ENCODE measurements at regions of chr3 and their contacts with region 1.

Region 1: GRCh38 chr3:43998836-43999727 is 242.6 kb upstream of the TOPAZ1 start:
- DNase-seq: no peak
- H3K4me3 ChIP-seq: peak overlapping the region; percentile 45 to 58
- H3K27ac ChIP-seq: no peak overlapping the region
- H3K4me1 ChIP-seq: peaks cover 0 to 52% (median 49%) of the 10 kb centered on the region in 4 donors
- H3K27me3 ChIP-seq: peaks cover 3 to 87% of the 10 kb centered on the region in 2 donors
- CTCF ChIP-seq: no peak

Region 2: GRCh38 chr3:43785551-43785950 is 213.5 kb before region 1 on chr3:
- intact Hi-C with region 1: loop called (anchors 10 kb)
- DNase-seq: no peak
- H3K4me3 ChIP-seq: no peak overlapping the region
- H3K27ac ChIP-seq: no peak overlapping the region
- H3K4me1 ChIP-seq: no peaks in the 10 kb centered on the region
- H3K27me3 ChIP-seq: no peaks in the 10 kb centered on the region
- CTCF ChIP-seq: no peak

Measured in tibial artery (tissue), 4 donors.